Cardiac septum (tissue), 1 donor: ENCODE measurements at regions of chr15 and their contacts with region 1.

Region 1: DNA sequence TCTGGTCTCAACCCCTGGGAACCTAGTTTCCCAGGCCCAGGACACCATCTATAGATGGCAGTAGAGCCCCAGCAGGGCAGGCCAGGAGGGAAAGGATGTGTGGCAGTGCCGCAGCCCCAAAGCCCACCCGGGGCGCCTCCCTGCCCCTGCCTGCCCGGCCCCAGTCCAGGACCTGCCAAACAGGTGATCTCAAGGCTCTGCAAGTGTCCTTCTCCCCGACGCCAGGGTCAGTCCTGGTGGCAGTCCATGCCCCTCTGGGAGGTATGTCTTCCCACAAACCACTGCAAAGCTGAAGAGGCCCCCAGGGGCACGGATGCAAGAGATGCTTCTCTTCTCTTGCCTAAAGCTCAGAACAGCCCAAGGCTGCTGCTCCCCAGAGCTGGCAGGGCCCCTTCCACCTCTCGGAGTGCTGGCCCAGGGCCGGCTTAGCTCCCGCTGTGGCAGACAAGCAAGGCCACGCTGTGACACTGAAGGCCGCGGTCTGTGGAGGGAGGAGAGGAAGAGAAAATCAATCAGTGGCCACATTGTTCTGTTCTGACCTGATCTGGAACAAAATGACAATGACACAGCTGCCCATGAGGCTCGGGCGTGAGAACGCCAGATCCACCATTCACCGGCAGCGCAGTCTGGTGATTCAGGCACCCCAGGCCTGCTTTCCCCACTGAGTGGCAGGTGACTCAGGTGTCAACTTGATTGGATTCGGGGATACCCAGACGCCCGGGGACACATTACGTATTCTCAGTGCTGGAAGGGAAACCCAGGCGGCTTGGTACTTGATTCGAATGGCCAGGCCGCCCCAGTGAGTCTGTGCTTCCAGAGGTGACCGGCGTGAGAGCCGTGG is 34.0 kb downstream of the KLHL25 start:
- DNase-seq: no peak

Region 2: DNA sequence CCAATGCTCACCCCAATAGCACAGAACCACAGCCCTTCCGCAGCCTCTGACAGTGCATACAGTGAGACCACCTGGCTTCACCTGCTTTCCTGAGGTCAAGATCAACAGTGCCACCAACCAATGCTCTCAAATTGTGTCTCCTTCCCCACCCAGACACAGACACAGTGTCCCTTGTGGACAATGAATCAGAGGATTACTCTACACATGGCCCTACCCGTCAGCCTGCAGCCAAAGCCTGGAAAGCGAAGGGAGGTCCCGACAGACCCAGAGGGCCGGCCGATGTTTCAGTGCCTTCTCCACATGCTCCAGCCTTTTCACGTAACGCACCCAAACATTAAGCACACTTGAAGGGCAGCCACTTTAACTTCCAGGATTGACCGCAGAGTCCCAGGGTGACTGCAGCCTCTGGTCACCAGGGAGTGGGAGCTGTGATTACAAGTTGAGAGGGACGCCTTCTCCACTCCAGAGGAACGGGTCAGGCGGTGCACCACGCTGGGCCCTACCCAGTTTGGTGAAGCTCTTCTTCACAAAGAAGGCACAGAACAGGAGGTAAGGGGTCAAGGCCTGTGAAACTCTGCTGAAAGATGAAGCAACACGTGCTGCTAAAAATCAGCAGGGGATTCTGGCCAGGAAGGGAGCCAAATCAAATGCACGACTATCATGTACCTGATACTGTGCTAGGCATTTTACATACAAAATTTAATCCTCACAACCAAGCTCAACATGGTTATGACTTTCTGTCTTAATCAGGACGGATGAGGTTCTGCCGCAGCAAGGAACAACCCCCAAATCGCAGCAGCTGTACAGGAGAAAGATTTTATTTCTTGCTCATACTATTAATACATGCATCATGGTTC is 16.7 kb after region 1 on chr15:
- intact Hi-C with region 1: loop called (anchors 2 kb)
- DNase-seq: no peak

Region 3: GRCh38 chr15:85825692-85826091 is 64.9 kb after region 1 on chr15:
- intact Hi-C with region 1: loop called (anchors 5 kb)
- DNase-seq: no peak